ENCODE measurements at regions of chr3 and their contacts with region 1.

Region 1: GRCh38 chr3:136109499-136109898 is 86.6 kb downstream of the MSL2 start:
- DNase-seq: no peak
- H3K4me3 Mint-ChIP-seq: no peak overlapping the region
- H3K27ac Mint-ChIP-seq: no peak overlapping the region
- H3K4me1 Mint-ChIP-seq: peaks cover 16% of the 10 kb centered on the region
- H3K27me3 Mint-ChIP-seq: peaks cover 26% of the 10 kb centered on the region

Region 2: GRCh38 chr3:136149667-136150066 is 40.2 kb after region 1 on chr3:
- intact Hi-C with region 1: loop called (anchors 5 kb)
- DNase-seq: no peak
- H3K4me3 Mint-ChIP-seq: no peak overlapping the region
- H3K27ac Mint-ChIP-seq: peak overlapping the region; percentile 63
- H3K4me1 Mint-ChIP-seq: peaks cover 44% of the 10 kb centered on the region
- H3K27me3 Mint-ChIP-seq: no peaks in the 10 kb centered on the region

Region 3: GRCh38 chr3:136495213-136495612 is 385.7 kb after region 1 on chr3:
- intact Hi-C with region 1: no loop called
- DNase-seq: no peak
- H3K4me3 Mint-ChIP-seq: no peak overlapping the region
- H3K27ac Mint-ChIP-seq: no peak overlapping the region
- H3K4me1 Mint-ChIP-seq: no peaks in the 10 kb centered on the region
- H3K27me3 Mint-ChIP-seq: no peaks in the 10 kb centered on the region

Measured in activated T-helper 1 cell treated with anti-CD3 and anti-CD28 coated beads, Interleukin-12 subunit alpha, Interleukin-12 subunit beta, Interleukin-2, Interleukin-4 antibody, amounts not matched to agents 30 ng/mL and 10 ng/mL and 1 ng/mL, durations not matched to agents 14 hours and 24 hours and 36 hours (primary cell).